ENCODE measurements at regions of chr11 and their contacts with region 1.

Region 1: DNA sequence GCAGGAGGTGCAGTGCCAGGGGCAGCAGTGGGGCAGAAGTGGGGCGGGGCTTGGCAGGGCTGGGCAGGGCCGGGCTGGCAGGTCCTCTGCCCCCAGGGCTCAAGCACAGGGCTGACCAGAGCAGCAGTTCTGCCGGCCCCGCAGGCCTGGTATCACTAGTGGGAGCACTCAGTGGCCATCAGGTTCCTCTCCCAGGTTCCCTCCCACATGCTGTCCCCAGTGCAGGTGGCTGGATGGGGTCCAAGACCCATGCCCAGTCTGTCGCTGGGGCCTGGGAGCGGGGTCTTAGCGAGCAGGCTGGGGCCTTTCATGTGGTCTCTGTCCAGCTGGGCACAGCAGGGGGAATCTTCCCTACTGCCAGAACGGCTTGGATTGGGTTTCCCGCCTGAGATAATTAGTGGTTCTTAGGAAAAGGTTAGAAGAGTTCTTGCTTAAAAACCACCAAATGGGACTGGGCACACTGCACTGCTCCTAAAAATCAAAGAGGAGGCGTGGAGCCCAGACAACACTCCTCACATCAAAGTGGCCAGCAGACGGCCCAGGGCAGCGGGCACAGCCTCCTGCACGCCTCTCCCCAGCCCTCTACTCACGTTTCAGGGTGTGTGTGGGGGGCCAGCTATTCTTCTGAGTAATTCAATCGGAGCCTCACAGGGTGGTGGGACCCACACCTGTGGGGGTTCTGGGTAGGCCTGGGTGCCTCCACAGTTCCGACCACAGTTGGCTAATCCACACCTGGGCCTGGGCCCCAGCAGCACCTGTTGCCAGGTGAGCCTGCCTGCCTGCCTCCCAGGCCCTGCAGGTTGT is 45.6 kb downstream of the TPCN2 start:
- DNase-seq: no peak
- H3K4me3 ChIP-seq: no peak overlapping the region
- CTCF ChIP-seq: no peak

Region 2: DNA sequence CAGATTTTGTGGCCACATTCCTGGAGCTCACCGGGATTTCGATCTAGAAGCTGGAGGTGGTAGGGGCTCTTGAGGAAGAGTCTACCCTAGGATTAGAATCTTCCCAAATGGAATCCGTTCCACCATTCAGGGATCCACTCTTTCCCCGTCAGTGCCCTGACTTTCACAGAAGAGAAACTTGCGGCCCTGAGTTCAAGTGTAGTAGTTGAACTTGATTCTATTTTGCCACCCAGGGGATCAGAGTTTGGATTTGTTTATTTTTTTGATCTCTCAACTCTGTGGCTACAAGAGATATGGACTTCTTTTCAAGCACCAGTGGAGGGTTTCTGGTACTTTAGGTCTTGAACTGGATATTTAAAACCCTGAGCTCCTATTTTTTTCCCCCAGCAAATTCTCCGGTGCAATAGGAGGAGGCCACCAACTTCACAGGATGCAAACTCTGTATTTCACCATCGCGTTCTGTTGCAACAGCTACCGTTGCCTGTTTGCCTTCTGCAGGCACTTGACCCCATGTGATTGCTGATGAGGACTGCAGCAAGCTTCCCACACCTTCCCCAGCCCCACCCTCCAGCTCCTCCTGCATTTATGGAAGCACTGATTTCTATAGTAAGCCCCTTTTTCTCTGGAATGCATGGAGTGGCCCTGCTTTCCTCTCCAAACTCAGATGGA is 66.5 kb before region 1 on chr11:
- in situ Hi-C with region 1: no loop called
- DNase-seq: no peak
- H3K4me3 ChIP-seq: no peak overlapping the region
- CTCF ChIP-seq: no peak

Region 3: DNA sequence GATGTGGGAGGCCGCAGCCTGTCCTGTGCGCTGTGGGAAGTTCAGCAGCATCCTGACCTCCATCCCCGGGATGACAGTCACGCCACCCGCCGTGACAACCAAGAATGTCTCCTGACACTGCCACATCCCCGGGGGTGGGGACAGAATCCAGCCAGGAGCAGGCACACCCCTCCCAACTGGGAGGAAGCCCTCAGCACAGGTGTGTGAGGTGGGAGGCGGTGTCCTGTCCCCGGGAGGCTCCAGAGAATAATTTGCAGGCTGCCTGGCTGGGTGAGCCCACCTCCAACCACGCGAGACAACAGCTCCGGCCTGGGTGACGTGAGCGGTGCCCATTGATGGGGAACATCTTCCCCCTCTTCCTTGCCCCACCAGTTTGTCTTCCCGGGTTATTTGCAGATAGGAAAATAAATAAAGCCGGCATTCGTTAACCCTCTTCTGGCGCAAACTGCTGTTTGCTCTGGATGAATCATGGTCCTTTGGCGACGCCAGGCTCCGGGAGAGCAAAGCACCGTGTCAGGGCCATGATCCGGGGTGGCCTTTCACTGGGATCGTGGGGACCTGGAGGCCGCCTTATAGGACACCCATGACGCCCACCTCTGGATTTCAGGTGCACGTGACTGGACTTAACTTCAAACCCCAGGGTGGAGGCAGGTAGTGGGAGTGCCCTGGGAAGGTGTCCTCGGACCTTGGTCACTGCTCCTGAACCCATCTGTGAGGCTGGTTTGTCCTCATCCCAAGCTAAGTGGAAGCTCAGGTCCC is 560.4 kb after region 1 on chr11:
- in situ Hi-C with region 1: loop called (anchors 5 kb)
- DNase-seq: no peak
- H3K4me3 ChIP-seq: no peak overlapping the region
- CTCF ChIP-seq: no peak